CD4-positive, alpha-beta T cell (primary cell): ENCODE measurements at regions of chr1 and their contacts with region 1.

Region 1: GRCh38 chr1:32330674-32331073 is 5.4 kb downstream of the MARCKSL1 start:
- DNase-seq: no peak
- ATAC-seq: no peak
- H3K4me3 ChIP-seq: no peak overlapping the region
- H3K4me3 Mint-ChIP-seq: no peak overlapping the region
- H3K27ac ChIP-seq: no peak overlapping the region
- H3K27ac Mint-ChIP-seq: peak overlapping the region; percentile 59
- H3K4me1 ChIP-seq: peaks cover 18% of the 10 kb centered on the region
- H3K4me1 Mint-ChIP-seq: peaks cover 32% of the 10 kb centered on the region
- H3K27me3 ChIP-seq: no peaks in the 10 kb centered on the region
- H3K27me3 Mint-ChIP-seq: no peaks in the 10 kb centered on the region
- CTCF ChIP-seq: no peak

Region 2: GRCh38 chr1:32406629-32407111 is 76.0 kb after region 1 on chr1:
- CTCF ChIA-PET with region 1: no interaction called
- POLR2A ChIA-PET with region 1: interaction called, 7 read pairs
- intact Hi-C with region 1: loop called in 1 of 2 experiments (anchors 1 kb)
- DNase-seq: no peak
- ATAC-seq: no peak
- H3K4me3 ChIP-seq: no peak overlapping the region
- H3K4me3 Mint-ChIP-seq: no peak overlapping the region
- H3K27ac ChIP-seq: no peak overlapping the region
- H3K27ac Mint-ChIP-seq: no peak overlapping the region
- H3K4me1 ChIP-seq: no peaks in the 10 kb centered on the region
- H3K4me1 Mint-ChIP-seq: no peaks in the 10 kb centered on the region
- H3K27me3 ChIP-seq: no peaks in the 10 kb centered on the region
- H3K27me3 Mint-ChIP-seq: no peaks in the 10 kb centered on the region
- CTCF ChIP-seq: no peak

Region 3: DNA sequence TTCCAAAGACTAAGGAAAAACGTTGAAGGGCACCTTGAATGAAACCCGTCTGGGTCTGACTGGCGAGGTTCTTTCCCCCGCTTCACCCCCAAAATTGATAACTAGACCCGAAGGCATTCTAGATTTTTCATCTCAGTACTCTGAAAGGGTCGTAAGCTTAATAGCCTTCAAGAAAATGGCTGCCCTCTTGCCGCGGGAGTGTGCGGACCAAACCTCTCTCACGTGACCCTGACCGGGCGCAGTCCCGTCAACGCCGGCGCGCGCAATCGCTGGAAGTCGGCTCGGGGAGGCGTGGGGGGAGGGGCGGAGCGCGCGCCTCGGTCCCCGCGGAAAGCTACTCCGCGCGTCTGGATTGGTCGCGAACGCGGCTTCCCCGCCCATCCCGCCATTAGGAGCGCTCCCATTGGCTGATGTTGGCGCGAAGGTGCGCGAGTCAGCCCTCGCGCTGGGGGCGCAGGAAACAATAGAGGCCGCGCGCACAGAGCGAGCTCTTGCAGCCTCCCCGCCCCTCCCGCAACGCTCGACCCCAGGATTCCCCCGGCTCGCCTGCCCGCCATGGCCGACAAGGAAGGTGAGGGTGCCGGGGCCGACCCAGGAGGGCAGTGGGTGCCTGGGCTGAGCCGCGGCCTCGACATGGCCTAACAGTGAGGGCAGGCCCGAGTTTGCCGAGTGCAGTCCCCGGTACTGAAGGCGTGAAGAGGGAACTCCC is 320.2 kb after region 1 on chr1 and contains the start of gene RBBP4:
- CTCF ChIA-PET with region 1: no interaction called
- POLR2A ChIA-PET with region 1: no interaction called
- intact Hi-C with region 1: no loop called
- DNase-seq: peak; percentile 94 to 99 (median 98)
- ATAC-seq: peak; percentile 79
- H3K4me3 ChIP-seq: peak within 1 kb of the TSS; percentile 80
- H3K4me3 Mint-ChIP-seq: peak within 1 kb of the TSS; percentile 94
- H3K27ac ChIP-seq: peak within 1 kb of the TSS; percentile 98 to 99
- H3K27ac Mint-ChIP-seq: peak within 1 kb of the TSS; percentile 95
- H3K4me1 ChIP-seq: peaks cover 58% of the 10 kb centered on the region
- H3K4me1 Mint-ChIP-seq: peaks cover 66% of the 10 kb centered on the region
- H3K27me3 ChIP-seq: no peaks in the 10 kb centered on the region
- H3K27me3 Mint-ChIP-seq: no peaks in the 10 kb centered on the region
- CTCF ChIP-seq: no peak
- total RNA-seq, gene RBBP4: 108 to 117 TPM